ENCODE measurements at regions of chr3 and their contacts with region 1.

Region 1: DNA sequence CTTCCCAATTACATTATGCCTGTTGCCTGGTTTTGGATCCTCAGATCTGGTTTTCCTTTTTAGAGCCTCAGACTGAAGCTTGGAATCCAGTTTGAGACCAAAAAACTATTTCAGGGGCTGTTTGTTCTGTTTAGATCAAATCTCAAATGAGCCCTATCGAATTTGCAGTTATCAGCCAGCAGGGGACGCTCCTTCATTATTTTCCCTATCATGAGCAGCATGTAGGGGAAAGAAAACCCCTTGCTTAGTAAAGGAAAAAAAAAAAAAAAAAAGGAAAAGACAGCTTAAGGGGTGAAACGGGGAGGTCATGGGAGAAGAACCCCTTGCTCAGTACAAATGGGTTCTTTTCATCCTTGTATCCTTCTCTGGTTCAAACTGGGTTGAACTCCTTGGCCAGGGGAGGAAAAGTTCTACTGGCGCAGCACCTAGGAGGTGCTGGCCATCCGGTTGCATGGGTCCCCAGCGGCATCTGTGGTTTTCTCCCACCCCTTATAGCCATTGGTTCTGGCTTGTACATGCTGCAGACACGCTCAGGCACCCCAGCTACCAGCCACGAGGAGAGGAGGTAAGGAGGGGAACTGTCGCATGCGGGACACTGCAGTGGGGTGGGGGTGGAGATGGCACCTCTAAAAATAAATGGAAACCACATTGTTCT is 1375.1 kb upstream of the ALCAM start:
- DNase-seq: no peak
- H3K4me3 ChIP-seq: no peak overlapping the region
- H3K4me3 Mint-ChIP-seq: no peak overlapping the region
- H3K27ac Mint-ChIP-seq: no peak overlapping the region
- H3K4me1 ChIP-seq: no peaks in the 10 kb centered on the region
- H3K4me1 Mint-ChIP-seq: no peaks in the 10 kb centered on the region
- H3K27me3 ChIP-seq: no peaks in the 10 kb centered on the region
- H3K27me3 Mint-ChIP-seq: no peaks in the 10 kb centered on the region
- CTCF ChIP-seq: peak; percentile 11 to 24

Region 2: GRCh38 chr3:102802819-102803420 is 1188.7 kb before region 1 on chr3:
- CTCF ChIA-PET with region 1: no interaction called
- POLR2A ChIA-PET with region 1: no interaction called
- intact Hi-C with region 1: loop called (anchors 10 kb)
- DNase-seq: no peak
- H3K4me3 ChIP-seq: no peak overlapping the region
- H3K4me3 Mint-ChIP-seq: no peak overlapping the region
- H3K27ac Mint-ChIP-seq: no peak overlapping the region
- H3K4me1 ChIP-seq: no peaks in the 10 kb centered on the region
- H3K4me1 Mint-ChIP-seq: no peaks in the 10 kb centered on the region
- H3K27me3 ChIP-seq: no peaks in the 10 kb centered on the region
- H3K27me3 Mint-ChIP-seq: no peaks in the 10 kb centered on the region
- CTCF ChIP-seq: no peak

Region 3: DNA sequence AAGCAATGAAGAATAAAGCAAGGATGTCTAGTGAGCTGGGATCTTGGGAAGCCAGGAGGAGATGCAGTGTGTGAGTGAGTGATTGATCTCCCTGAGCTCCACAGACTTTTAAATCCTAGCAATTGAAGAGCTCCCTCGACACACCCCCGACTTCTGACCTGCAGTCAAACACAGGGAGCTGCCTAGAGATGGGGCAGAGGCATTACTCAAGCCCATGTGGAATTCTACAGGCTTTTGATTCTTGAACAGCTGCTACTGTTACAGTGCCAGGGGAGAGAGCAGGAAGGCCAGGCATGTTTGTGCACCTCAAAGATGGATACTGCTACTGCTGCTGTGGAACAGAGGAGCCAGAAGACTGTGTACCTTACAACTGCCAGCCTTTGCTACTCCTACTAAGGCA is 28.0 kb before region 1 on chr3:
- CTCF ChIA-PET with region 1: no interaction called
- POLR2A ChIA-PET with region 1: no interaction called
- intact Hi-C with region 1: no loop called
- DNase-seq: peak; percentile 9 to 46
- H3K4me3 ChIP-seq: no peak overlapping the region
- H3K4me3 Mint-ChIP-seq: peak overlapping the region; percentile 48
- H3K27ac Mint-ChIP-seq: peak overlapping the region; percentile 23
- H3K4me1 ChIP-seq: peaks cover 22% of the 10 kb centered on the region; the same call in 1 of the 2 replicates
- H3K4me1 Mint-ChIP-seq: peaks cover 21% of the 10 kb centered on the region
- H3K27me3 ChIP-seq: no peaks in the 10 kb centered on the region
- H3K27me3 Mint-ChIP-seq: no peaks in the 10 kb centered on the region
- CTCF ChIP-seq: no peak

Region 4: GRCh38 chr3:104005816-104006215 is 14.2 kb after region 1 on chr3:
- CTCF ChIA-PET with region 1: no interaction called
- POLR2A ChIA-PET with region 1: no interaction called
- intact Hi-C with region 1: no loop called
- DNase-seq: no peak
- H3K4me3 ChIP-seq: no peak overlapping the region
- H3K4me3 Mint-ChIP-seq: no peak overlapping the region
- H3K27ac Mint-ChIP-seq: no peak overlapping the region
- H3K4me1 ChIP-seq: peaks cover 5% of the 10 kb centered on the region; the same call in 1 of the 2 replicates
- H3K4me1 Mint-ChIP-seq: peaks cover 16% of the 10 kb centered on the region
- H3K27me3 ChIP-seq: no peaks in the 10 kb centered on the region
- H3K27me3 Mint-ChIP-seq: no peaks in the 10 kb centered on the region
- CTCF ChIP-seq: no peak